ENCODE measurements at regions of chr3 and their contacts with region 1.

Region 1: DNA sequence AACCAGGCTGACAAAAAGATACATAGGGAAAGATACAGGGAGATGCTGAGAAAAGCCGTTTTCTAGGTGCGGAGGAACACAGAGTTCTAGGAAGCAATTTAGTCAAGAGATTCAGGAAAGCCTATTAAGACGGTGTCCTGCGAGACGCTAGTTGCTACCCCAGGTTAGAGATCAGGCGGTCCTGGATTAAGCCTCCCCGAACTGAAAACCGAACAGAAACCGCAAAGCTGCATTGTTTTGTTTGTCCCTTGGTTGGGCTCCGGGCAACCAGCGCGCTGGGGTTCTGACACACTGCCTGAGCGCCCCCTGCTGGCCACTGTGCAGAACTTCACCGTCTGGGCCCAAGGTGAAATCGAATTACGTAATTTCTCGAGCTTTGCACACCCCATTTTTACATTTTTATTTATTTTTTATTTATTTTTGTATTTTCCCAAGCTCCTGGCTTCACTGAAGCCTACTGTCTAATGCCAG is 37.3 kb upstream of the NDUFB4 start:
- DNase-seq: peak; percentile 78 to 95 (median 88)

Region 2: DNA sequence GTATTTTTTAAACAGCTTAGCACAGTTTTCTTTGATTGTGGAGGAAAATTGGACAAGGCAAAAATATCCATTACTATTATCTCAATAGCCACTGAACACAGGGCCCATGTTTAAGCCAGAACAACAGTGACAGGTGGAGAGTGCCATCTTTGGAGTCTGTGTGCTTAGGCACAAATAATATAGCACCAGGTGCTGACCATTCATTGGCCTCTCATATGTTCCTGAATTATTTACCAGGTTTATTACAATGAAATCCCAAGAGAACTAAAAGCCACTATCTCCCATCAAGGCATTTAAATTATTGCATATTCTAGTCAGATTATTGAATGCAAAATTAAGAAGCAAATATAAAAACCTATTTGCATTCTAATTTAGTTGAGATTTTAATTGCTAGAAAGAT is 313.4 kb before region 1 on chr3:
- intact Hi-C with region 1: loop called (anchors 10 kb)
- DNase-seq: no peak

Region 3: DNA sequence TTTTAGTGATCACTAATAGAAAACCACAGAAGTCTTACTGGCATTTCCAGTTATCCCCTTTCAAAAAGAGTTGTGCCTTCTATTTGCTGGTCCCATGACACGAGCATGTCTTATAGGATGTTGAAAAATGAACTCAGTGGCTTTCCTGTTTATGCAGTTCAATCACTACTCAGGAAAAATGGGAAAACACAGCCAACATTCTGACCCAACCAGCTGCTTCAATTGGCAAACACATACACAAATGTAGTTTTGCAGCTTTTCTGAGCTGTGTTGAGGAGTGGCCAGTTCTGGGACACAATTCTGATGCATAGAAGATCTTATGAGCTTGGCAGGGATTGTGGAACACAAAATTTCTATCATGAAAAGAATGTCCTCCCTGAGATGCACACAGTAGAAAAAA is 148.3 kb before region 1 on chr3:
- intact Hi-C with region 1: no loop called
- DNase-seq: no peak

Region 4: DNA sequence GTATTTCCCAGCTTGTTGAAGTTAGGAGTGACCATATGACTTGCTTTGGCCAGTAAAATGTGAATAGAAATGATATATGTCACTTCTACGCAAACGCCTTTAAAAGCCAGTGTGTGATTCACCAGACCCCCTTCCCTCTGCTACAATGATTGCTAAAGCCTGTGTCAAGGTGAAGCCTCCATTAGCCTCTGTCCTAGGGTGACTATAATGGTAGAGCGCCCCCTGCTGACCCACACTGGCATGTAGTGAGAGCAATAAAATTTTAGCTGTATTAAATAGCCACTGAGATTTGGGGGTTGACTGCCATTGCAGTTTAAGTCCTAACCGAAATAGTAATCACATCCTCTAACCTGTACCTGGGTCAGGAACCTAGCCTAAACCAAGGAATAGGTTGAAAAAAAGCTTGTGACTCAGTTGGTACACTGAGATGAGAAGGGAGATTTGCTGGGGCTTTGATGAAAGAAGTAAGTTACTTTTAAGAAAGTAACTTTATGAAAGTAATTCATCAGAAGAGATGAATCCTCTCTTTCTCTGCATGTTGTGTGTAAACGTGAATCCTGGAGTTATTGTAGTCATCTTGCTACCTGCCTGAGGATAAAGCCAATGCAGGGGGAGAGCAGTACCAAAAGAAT is 236.3 kb after region 1 on chr3:
- intact Hi-C with region 1: loop called (anchors 5 kb)
- DNase-seq: peak; percentile 41 to 91 (median 80)

Measured in head of caudate nucleus (tissue), 42 donors.